ENCODE measurements at regions of chr19 and their contacts with region 1.

Region 1: GRCh38 chr19:11496391-11497163 is 9.1 kb downstream of the ZNF653 start:
- DNase-seq: peak in 5 of 6 donors; percentile 33 to 80 (median 66)
- ATAC-seq: peak; percentile 53 to 86 (median 74)
- H3K4me3 ChIP-seq: no peak overlapping the region
- H3K27ac ChIP-seq: no peak overlapping the region
- H3K4me1 ChIP-seq: no peaks in the 10 kb centered on the region
- H3K27me3 ChIP-seq: no peaks in the 10 kb centered on the region
- CTCF ChIP-seq: peak; percentile 9 to 39 (median 23)

Region 2: DNA sequence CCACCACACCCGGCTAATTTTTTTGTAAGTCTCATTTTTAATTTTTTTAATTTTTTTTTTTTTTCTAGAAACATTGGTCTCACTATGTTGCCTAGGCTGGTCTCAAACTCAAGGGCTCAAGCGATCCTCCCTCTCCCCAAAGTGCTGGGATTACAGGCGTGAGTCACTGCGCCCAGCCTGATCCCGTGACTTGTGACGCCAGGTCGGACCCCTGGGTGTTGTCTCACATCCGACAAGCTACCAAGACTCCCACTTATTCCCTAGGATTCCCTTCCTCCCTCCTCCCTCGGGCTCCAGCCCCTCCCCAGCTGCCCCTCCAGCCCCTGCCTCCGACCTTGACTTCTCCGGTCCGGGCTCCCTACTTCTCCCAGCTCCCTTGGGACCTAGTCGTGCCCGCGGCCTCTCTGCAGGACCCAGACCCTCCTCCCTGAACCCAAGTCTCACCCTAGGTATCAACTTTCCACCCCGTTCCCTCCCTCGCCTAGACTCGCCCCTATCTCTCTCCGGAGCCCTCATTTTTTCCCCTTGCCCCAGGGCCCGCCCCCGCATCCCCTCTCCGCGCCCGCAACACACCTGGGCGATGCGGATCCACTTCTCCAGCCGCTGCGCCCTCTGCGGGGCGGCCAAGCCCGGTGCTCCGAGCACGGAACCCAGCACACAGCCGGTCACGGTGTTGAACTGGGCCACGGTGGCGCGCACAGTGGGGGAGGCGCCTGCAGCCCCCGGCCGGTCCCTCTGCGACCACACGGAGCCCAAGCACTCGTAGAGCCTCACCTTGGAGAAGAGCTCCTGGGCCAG is 90.5 kb before region 1 on chr19:
- intact Hi-C with region 1: no loop called
- DNase-seq: peak in 2 of 6 donors; percentile 15 to 63
- ATAC-seq: no peak
- H3K4me3 ChIP-seq: no peak overlapping the region
- H3K27ac ChIP-seq: no peak overlapping the region
- H3K4me1 ChIP-seq: no peaks in the 10 kb centered on the region
- H3K27me3 ChIP-seq: no peaks in the 10 kb centered on the region
- CTCF ChIP-seq: no peak

Region 3: GRCh38 chr19:11578258-11579142 is 81.9 kb after region 1 on chr19:
- intact Hi-C with region 1: loop called in 1 of 3 experiments (anchors 10 kb)
- DNase-seq: peak in 4 of 6 donors; percentile 31 to 75 (median 48)
- ATAC-seq: peak; percentile 24 to 76 (median 51)
- H3K4me3 ChIP-seq: peak overlapping the region; percentile 8 to 40 (median 28)
- H3K27ac ChIP-seq: peak overlapping the region in 1 of 4 donors; percentile 65
- H3K4me1 ChIP-seq: peaks cover 0 to 7% (median 0%) of the 10 kb centered on the region in 3 donors
- H3K27me3 ChIP-seq: no peaks in the 10 kb centered on the region
- CTCF ChIP-seq: no peak

Region 4: DNA sequence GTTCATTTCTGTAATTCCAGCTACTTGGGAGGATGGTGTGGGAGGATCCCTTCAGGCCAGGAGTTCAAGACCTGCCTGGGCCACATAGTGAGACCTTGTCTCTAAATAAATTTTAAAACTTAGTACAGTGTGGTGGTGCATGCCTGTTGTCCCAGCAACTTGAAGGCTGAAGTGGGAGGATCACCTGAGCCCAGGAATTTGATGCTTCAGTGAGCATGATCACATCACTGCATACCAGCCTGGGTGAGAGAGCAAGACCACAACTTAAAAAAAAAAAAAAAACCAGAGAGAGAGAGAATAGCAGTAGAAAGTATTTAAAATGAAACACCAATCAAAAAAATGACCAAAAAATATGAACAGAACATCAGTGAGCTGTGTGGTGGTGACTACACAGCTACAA is 249.3 kb after region 1 on chr19:
- intact Hi-C with region 1: no loop called
- DNase-seq: no peak
- ATAC-seq: no peak
- H3K4me3 ChIP-seq: no peak overlapping the region
- H3K27ac ChIP-seq: no peak overlapping the region
- H3K4me1 ChIP-seq: no peaks in the 10 kb centered on the region
- H3K27me3 ChIP-seq: no peaks in the 10 kb centered on the region
- CTCF ChIP-seq: no peak